ENCODE measurements at regions of chr11 and their contacts with region 1.

Region 1: GRCh38 chr11:108654994-108655631 is 9.8 kb upstream of the DDX10 start:
- DNase-seq: no peak
- H3K4me3 ChIP-seq: no peak overlapping the region
- H3K27ac ChIP-seq: no peak overlapping the region
- H3K4me1 ChIP-seq: no peaks in the 10 kb centered on the region
- H3K27me3 ChIP-seq: no peaks in the 10 kb centered on the region
- CTCF ChIP-seq: peak in 6 of 11 experiments; percentile 20 to 40 (median 23)
- POLR2A ChIP-seq: no peak

Region 2: GRCh38 chr11:108008656-108009496 is 646.2 kb before region 1 on chr11 and contains the start of gene CUL5:
- intact Hi-C with region 1: loop called (anchors 10 kb)
- DNase-seq: peak; percentile 97
- H3K4me3 ChIP-seq: peak within 1 kb of the TSS; percentile 67 to 98 (median 94)
- H3K27ac ChIP-seq: peak within 1 kb of the TSS; percentile 95 to 98 (median 97)
- H3K4me1 ChIP-seq: peaks cover 35 to 56% (median 48%) of the 10 kb centered on the region in 6 donors
- H3K27me3 ChIP-seq: no peaks in the 10 kb centered on the region
- CTCF ChIP-seq: peak; percentile 75 to 93 (median 89)
- POLR2A ChIP-seq: peak in 1 of 3 donors; percentile 15
- total RNA-seq, gene CUL5: 31.6 to 42.7 (median 38.3) TPM

Region 3: GRCh38 chr11:108117746-108118371 is 537.3 kb before region 1 on chr11:
- intact Hi-C with region 1: loop called (anchors 10 kb)
- DNase-seq: no peak
- H3K4me3 ChIP-seq: no peak overlapping the region
- H3K27ac ChIP-seq: no peak overlapping the region
- H3K4me1 ChIP-seq: peaks cover 9 to 30% (median 21%) of the 10 kb centered on the region in 6 donors
- H3K27me3 ChIP-seq: no peaks in the 10 kb centered on the region
- CTCF ChIP-seq: peak in 8 of 11 experiments; percentile 26 to 61 (median 42)
- POLR2A ChIP-seq: no peak

Region 4: DNA sequence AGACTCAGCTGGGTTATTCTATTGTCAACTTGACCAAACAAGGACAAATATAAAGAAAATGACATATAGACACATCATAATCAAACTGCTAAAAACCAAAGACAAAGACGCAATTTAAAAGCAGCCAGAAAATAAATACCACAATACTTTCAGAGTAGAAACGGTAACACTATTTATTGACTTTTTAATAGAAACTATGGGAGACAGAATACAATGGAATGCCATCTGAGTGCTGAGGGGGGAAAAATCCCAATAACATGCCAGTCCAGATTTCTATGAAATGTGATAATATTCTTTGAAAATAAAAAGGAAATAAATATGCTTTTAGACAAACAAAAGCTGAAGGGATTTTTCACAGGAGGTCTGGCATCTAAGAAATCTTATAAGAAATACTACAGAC is 218.5 kb before region 1 on chr11:
- intact Hi-C with region 1: no loop called
- DNase-seq: no peak
- H3K4me3 ChIP-seq: no peak overlapping the region
- H3K27ac ChIP-seq: no peak overlapping the region
- H3K4me1 ChIP-seq: no peaks in the 10 kb centered on the region
- H3K27me3 ChIP-seq: no peaks in the 10 kb centered on the region
- CTCF ChIP-seq: no peak
- POLR2A ChIP-seq: no peak

Region 5: DNA sequence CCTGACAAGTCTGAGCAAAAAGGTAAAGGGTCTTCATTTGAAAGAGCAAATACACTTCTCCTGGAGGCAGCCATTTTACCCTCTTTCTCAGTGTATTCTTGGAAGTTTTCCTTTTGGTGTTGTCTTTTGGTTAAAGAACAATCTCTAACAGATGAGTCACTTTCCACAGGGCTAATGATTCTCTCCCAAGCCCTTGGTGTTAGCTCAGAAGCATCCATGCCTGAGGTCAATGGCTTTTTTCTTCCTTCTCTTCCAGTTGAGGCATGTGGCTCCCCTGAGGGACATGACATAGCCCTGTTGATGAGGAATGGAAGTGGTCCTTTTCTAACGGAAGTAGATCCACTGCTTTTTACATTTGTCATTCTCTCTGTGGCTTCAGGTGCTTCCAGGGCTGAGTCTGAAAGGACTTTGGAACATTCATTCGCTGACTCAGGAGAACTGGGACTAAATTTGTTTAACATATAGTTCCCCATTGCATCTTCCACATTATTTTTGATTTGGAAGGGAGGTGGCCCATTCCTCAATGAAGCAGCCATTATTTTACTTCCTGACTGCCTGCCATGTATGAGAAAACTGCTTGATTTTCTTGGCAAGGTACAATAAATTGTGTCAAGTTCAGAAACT is 143.2 kb before region 1 on chr11:
- intact Hi-C with region 1: no loop called
- DNase-seq: no peak
- H3K4me3 ChIP-seq: no peak overlapping the region
- H3K27ac ChIP-seq: no peak overlapping the region
- H3K4me1 ChIP-seq: no peaks in the 10 kb centered on the region
- H3K27me3 ChIP-seq: no peaks in the 10 kb centered on the region
- CTCF ChIP-seq: no peak
- POLR2A ChIP-seq: no peak

Measured in spleen (tissue), 13 donors.